HEK293T (cell line): ENCODE measurements at regions of chr21 and their contacts with region 1.

Region 1: GRCh38 chr21:37711836-37712568 is 204.3 kb downstream of the KCNJ6 start:
- DNase-seq: peak; percentile 73

Region 2: GRCh38 chr21:38126669-38127303 is 414.8 kb after region 1 on chr21:
- CTCF ChIA-PET with region 1: interaction called, 10 read pairs
- POLR2A ChIA-PET with region 1: no interaction called
- DNase-seq: peak; percentile 59